Motor neuron (in vitro differentiated cells): ENCODE measurements at regions of chr12 and their contacts with region 1.

Region 1: DNA sequence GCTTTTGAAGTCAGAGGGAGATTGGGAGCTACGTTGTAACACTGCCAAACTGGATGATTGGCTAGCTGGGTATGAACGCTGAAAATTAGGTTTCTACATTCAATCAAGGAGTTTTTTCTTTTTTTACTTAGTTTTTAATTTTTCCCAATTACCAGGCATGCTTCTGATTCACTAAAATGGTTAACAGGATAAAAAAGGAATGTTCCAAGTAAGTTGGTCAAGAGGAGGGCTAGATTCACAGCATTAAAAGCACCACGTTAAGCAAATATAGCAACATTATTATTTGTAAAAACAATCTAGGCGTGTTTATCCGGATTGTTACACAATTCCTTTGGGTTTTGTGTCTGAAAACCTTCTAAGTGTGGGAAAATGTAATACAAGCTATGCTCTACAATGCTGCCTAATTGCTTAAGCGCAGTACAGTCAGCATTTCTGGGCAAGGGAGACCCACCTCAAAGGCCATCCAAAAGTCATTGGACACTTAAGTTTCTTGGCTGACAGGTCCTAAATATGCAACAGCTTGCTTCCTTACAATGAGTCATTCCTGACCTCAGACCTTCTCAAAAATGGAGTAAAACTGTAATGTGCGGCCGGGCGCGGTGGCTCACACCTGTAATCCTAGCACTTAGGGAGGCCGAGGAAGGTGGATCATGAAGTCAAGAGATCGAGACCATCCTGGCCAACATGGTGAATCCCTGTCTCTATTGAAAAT is 1.2 kb downstream of the RPLP0 start:
- ATAC-seq: no peak
- H3K4me3 ChIP-seq: peak overlapping the region; percentile 63 to 85 (median 73)
- H3K27ac ChIP-seq: peak overlapping the region; percentile 23 to 78
- H3K4me1 ChIP-seq: peaks cover 17 to 20% of the 10 kb centered on the region in 2 donors

Region 2: GRCh38 chr12:120399531-120399930 is 199.8 kb after region 1 on chr12:
- in situ Hi-C with region 1: no loop called
- ATAC-seq: peak in 4 of 8 experiments; percentile 2 to 75 (median 70)
- H3K4me3 ChIP-seq: no peak overlapping the region
- H3K27ac ChIP-seq: no peak overlapping the region
- H3K4me1 ChIP-seq: peaks cover 34% of the 10 kb centered on the region in 2 donors

Region 3: DNA sequence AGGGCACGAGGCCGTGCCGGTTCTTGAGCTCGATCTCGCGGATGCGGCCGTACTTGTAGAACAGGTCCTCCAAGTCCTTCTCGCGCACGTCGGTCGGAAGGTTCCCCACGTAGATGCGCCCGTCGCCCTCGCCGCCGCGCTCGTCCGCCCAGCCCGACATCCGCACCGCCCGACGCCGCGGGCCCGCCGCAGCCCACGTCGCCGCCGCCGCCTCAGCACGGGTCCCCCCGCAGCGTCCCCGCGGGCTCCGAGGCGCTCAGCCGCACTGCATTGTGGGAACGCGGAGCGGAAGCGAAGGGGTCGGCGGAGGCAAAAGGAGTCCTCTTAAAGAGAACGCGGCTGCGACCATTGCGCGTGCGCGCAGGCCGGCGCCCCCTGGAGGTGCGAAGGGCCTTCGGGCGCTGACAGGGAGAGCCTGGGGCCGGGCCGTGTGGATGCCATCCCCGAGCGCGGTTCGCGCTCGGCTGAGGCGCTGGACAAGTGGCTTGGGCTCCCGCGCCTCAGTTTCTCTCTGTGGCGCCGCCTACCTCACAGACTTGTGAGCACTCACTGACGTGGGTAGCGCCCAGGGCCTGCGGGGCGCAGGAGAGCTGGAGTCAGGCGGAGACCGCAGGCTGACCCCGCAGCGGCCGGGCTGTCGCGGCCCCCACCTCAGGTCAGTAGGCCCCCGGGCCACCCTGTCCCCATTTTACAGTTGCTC is 269.8 kb after region 1 on chr12 and contains the start of gene SRSF9:
- in situ Hi-C with region 1: loop called in 1 of 9 experiments (anchors 25 kb)
- ATAC-seq: peak; percentile 82 to 96 (median 92)
- H3K4me3 ChIP-seq: peak within 1 kb of the TSS; percentile 66 to 95 (median 70)
- H3K27ac ChIP-seq: peak within 1 kb of the TSS; percentile 97 to 98
- H3K4me1 ChIP-seq: peaks cover 7 to 19% of the 10 kb centered on the region in 2 donors
- total RNA-seq, gene SRSF9: 98.3 to 197 (median 118) TPM